Posterior vena cava (tissue), 2 donors: ENCODE measurements at regions of chr10 and their contacts with region 1.

Region 1: GRCh38 chr10:14478604-14479003 is 147.9 kb upstream of the FRMD4A start:
- DNase-seq: peak; percentile 84

Region 2: DNA sequence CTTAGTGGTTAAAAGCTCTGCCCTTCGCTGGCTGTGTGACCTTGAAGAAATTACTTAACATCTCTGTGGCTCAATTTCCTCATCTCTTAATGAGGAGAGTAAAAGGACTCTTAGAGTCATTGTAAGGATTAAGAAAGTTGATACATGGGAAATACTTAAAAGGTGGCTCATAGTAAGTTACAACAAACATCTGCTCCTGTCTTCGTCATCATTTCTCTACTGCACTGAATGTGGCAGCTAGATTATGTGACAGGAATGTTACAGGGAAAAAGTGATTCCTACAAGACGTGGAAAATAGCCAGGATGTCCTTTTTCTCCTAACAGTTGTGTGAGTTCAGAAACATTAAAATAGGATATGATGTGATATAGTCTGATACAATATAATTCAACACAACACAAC is 332.6 kb before region 1 on chr10:
- intact Hi-C with region 1: no loop called
- DNase-seq: no peak

Region 3: DNA sequence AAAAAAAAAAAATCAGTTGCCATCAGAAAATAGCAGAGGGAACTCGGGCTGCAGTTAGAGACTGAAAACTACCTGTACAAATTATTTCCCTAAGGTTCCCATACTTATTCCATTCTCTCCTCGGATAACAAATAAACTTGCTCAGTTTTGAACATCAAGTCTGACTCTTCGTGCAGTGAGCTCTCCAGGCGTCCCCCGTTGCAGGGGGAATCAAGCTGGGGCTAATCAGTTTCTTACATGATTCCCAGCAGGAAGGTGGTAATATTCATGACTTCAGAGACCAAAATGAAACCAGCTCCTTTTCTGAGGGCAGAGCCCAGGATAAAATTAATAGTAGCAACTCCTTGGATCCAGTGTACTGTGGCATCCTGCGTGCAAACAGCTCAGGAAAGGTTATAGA is 283.2 kb before region 1 on chr10:
- intact Hi-C with region 1: loop called (anchors 2 to 5 kb)
- DNase-seq: no peak

Region 4: DNA sequence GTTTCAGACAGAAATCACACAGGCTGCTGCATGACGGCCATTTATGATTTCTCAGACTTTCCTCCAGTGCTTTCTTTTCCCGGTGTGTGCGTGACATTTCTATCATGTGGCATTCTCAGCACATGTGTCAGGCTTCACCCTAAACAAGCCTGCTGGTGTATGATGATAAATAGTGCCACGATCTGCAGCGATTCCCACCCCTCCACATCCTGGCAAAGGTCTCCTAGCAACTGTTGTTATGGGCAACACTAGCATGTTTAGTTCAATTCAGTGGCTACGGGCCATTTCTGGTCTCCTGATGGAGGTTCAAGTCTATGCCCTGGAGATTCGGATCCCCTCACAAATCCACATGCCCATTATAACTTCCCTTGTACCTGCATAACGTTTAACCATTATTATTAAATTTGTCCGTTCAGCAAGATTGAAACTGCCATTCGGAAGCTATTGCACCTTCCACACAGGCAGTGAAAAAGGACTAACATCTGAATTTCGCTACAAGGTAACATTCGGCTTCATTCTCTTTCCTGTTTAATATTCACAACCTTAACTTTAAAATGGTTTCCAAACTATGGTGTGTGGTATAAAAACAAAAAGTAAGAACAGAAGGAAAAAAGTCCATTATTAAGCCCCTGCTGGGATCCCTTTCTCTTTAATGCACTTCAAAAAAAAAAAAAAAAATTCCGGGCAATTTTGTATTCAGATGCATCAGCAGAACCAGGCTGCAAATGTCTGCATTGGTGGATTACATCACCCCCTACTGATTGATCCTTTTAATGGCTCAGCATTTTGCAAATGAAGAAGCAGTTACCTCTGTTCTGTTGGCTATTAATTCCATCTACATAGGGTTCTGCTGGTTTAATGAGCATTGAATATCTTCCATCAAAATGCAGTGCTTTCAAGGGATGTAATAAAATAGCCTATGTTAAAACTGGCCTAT is 238.1 kb before region 1 on chr10:
- intact Hi-C with region 1: no loop called
- DNase-seq: no peak